ENCODE measurements at regions of chr12 and their contacts with region 1.

Region 1: GRCh38 chr12:6752921-6753771 is at the start of gene MLF2:
- DNase-seq: peak; percentile 96 to 98 (median 97)
- H3K4me3 ChIP-seq: peak within 1 kb of the TSS; percentile 62 to 77
- H3K4me3 Mint-ChIP-seq: peak within 1 kb of the TSS; percentile 94 to 98 (median 96)
- H3K27ac ChIP-seq: peak within 1 kb of the TSS; percentile 84
- H3K27ac Mint-ChIP-seq: peak within 1 kb of the TSS; percentile 99 to 100 (median 99)
- H3K4me1 ChIP-seq: peaks cover 13% of the 10 kb centered on the region
- H3K4me1 Mint-ChIP-seq: peaks cover 10 to 24% (median 17%) of the 10 kb centered on the region in 4 donors
- H3K27me3 ChIP-seq: no peaks in the 10 kb centered on the region
- H3K27me3 Mint-ChIP-seq: peaks cover 0 to 1% of the 10 kb centered on the region in 2 donors
- total RNA-seq, gene MLF2: 79.8 to 80.3 TPM

Region 2: GRCh38 chr12:6476489-6476888 is 276.7 kb before region 1 on chr12:
- CTCF ChIA-PET with region 1: no interaction called
- POLR2A ChIA-PET with region 1: no interaction called
- intact Hi-C with region 1: no loop called
- DNase-seq: no peak
- H3K4me3 ChIP-seq: no peak overlapping the region
- H3K4me3 Mint-ChIP-seq: no peak overlapping the region
- H3K27ac ChIP-seq: no peak overlapping the region
- H3K27ac Mint-ChIP-seq: no peak overlapping the region
- H3K4me1 ChIP-seq: peaks cover 1% of the 10 kb centered on the region
- H3K4me1 Mint-ChIP-seq: peaks cover 0 to 3% (median under 1%) of the 10 kb centered on the region in 4 donors
- H3K27me3 ChIP-seq: no peaks in the 10 kb centered on the region
- H3K27me3 Mint-ChIP-seq: peaks cover 0 to 2% of the 10 kb centered on the region in 2 donors

Region 3: DNA sequence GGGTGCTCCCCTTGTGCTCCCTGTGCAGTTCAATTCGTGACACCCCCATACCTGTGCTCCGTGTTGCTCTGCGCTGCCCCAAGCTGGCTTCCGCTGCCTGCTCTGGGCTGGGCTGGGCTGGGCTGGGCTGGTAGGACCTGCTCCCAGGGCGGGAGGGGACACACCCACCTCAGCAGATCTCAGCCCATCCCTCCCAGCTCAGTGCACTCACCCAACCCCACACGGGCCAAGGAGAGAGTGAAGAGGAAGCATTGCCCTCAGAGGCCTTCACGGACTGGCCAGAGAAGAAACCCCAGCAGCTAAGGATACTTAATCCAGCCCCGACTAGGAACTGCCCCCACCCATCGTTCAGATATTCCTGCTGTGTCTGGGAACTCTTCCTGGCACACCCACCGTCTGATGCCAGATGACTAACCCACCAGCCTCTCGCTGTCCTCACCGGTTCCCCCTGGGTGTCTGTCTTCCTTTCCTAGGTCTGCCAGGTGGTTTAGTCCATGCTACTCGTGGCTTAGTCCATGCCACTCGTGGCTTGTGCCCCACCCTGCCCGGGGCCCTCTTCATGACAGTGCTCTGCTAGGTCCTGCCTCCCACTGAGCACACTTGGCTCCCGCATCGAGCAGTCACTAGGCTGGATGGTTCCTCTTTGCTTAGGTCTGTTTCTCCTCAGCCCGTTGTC is 117.2 kb before region 1 on chr12 and contains the start of gene LPAR5:
- CTCF ChIA-PET with region 1: no interaction called
- POLR2A ChIA-PET with region 1: no interaction called
- intact Hi-C with region 1: no loop called
- DNase-seq: peak in 2 of 5 donors; percentile 34 to 44
- H3K4me3 ChIP-seq: no peak within 1 kb of the TSS
- H3K4me3 Mint-ChIP-seq: peak within 1 kb of the TSS; percentile 71 to 85 (median 79)
- H3K27ac ChIP-seq: peak within 1 kb of the TSS; percentile 28
- H3K27ac Mint-ChIP-seq: peak within 1 kb of the TSS; percentile 68 to 91 (median 84)
- H3K4me1 ChIP-seq: peaks cover 36% of the 10 kb centered on the region
- H3K4me1 Mint-ChIP-seq: peaks cover 26 to 52% (median 39%) of the 10 kb centered on the region in 4 donors
- H3K27me3 ChIP-seq: no peaks in the 10 kb centered on the region
- H3K27me3 Mint-ChIP-seq: no peaks in the 10 kb centered on the region
- total RNA-seq, gene LPAR5: 10.2 to 11.1 TPM

Region 4: DNA sequence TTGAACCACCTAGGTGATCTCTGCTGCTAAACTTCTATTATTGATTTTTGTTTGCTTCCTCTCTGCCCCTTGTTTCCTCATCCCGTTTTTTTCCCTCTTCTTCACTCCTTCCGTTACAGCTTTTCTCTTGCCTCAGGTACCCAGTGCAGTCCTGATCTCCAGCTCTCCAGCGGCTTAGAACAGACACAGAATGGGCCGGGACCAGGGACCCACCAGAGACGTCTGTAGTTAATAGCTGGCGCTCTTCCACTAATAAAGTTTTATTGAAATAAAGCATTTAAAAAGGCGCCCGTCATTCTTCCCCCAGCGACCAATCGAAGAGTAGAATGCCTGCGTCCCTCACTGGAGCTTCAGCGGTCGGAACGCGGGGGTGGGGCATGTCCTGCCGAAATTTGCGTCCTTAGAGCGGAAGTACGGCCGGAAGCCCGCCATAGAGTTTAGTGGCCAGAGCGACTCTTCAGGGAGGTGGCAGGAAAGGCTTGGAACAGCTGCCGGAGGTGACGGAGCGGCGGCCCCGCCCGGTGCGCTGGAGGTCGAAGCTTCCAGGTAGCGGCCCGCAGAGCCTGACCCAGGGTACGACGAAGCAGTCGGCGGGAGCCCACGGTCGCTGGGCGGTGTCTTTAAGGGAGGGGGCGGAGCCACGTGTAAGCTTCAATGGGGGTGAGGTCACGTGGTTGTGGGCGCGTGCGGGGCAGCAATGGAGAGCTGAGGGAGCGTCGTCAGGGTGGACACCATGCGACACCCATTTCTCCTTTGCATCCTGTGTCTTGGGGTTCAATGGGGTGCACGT is 29.3 kb before region 1 on chr12 and contains the start of gene COPS7A:
- CTCF ChIA-PET with region 1: interaction called, 32 read pairs
- POLR2A ChIA-PET with region 1: interaction called, 52 read pairs
- intact Hi-C with region 1: loop called (anchors 1 kb)
- DNase-seq: peak; percentile 93 to 97 (median 96)
- H3K4me3 ChIP-seq: peak within 1 kb of the TSS; percentile 40 to 64
- H3K4me3 Mint-ChIP-seq: peak within 1 kb of the TSS; percentile 88 to 98 (median 94)
- H3K27ac ChIP-seq: peak within 1 kb of the TSS; percentile 68
- H3K27ac Mint-ChIP-seq: peak within 1 kb of the TSS; percentile 92 to 99 (median 98)
- H3K4me1 ChIP-seq: peaks cover 21% of the 10 kb centered on the region
- H3K4me1 Mint-ChIP-seq: peaks cover 15 to 31% (median 22%) of the 10 kb centered on the region in 4 donors
- H3K27me3 ChIP-seq: no peaks in the 10 kb centered on the region
- H3K27me3 Mint-ChIP-seq: no peaks in the 10 kb centered on the region
- total RNA-seq, gene COPS7A: 36.9 to 37.7 TPM

Region 5: DNA sequence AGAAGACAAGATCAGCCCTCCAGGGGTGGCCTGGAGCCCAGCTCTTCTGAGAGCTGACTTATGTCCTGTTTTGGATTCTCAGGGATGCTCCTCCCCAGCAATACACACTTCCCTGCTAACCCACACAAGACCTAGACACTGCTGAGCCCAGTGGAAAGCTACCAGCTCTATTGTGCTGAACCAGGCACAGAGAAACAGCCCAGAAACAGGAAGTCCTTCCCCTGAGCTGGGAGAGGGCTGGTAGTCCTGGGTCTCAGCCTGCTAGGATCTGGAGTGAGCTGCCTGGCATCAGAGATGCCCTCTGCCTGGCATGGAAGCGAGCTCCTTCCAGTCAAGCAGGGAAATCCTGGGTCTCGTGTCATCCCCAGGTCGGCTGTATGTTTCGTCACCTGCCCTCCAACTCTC is 17.9 kb after region 1 on chr12:
- CTCF ChIA-PET with region 1: interaction called, 343 read pairs
- POLR2A ChIA-PET with region 1: interaction called, 44 read pairs
- intact Hi-C with region 1: loop called (anchors 1 kb)
- DNase-seq: no peak
- H3K4me3 ChIP-seq: no peak overlapping the region
- H3K4me3 Mint-ChIP-seq: peak overlapping the region in 2 of 8 donors; percentile 21 to 87
- H3K27ac ChIP-seq: no peak overlapping the region
- H3K27ac Mint-ChIP-seq: peak overlapping the region in 3 of 7 donors; percentile 14 to 60 (median 18)
- H3K4me1 ChIP-seq: peaks cover 46% of the 10 kb centered on the region
- H3K4me1 Mint-ChIP-seq: peaks cover 24 to 72% (median 46%) of the 10 kb centered on the region in 4 donors
- H3K27me3 ChIP-seq: peaks cover 20% of the 10 kb centered on the region
- H3K27me3 Mint-ChIP-seq: peaks cover 13 to 48% of the 10 kb centered on the region in 2 donors

Region 6: DNA sequence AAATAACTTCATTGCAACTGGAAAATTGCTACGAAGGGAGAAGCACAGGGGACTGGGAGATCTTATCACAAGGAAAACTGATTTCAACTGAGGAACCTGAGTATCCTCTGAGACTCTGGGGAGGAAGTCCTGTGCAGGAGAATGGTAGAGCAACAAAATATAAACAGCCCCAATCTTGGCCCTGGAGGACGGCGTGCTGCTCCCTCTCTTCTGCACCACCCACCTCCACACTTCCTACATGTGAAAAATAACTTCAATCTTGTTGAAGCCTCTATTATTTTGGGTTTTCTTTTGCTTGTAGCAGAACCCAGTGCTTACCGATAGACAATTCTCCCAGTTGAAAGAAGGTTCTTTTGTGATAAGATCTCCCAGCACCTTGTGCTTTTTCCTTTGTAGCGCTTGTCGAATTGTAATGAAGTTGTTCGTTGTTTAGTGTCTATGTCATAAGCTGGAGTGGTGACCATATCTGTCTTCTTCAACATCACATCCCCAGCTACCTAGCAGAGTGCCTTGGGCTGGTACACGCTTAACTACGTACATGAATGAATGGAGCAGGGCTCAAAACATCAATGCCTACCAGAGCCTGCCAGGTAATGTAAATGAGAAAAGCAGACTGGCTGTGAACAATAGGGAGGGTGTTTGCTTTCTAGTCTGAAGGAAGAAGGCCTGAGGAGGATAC is 33.4 kb after region 1 on chr12:
- CTCF ChIA-PET with region 1: interaction called, 343 read pairs
- POLR2A ChIA-PET with region 1: interaction called, 36 read pairs
- intact Hi-C with region 1: loop called (anchors 1 kb)
- DNase-seq: peak; percentile 61 to 75 (median 68)
- H3K4me3 ChIP-seq: peak overlapping the region in 1 of 2 donors; percentile 36
- H3K4me3 Mint-ChIP-seq: peak overlapping the region; percentile 65 to 87 (median 73)
- H3K27ac ChIP-seq: peak overlapping the region; percentile 70
- H3K27ac Mint-ChIP-seq: peak overlapping the region; percentile 89 to 97 (median 96)
- H3K4me1 ChIP-seq: peaks cover 52% of the 10 kb centered on the region
- H3K4me1 Mint-ChIP-seq: peaks cover 27 to 79% (median 57%) of the 10 kb centered on the region in 4 donors
- H3K27me3 ChIP-seq: no peaks in the 10 kb centered on the region
- H3K27me3 Mint-ChIP-seq: no peaks in the 10 kb centered on the region

Region 7: GRCh38 chr12:6825398-6826124 is 72.4 kb after region 1 on chr12:
- CTCF ChIA-PET with region 1: interaction called, 143 read pairs
- POLR2A ChIA-PET with region 1: interaction called, 48 read pairs
- intact Hi-C with region 1: loop called (anchors 1 kb)
- DNase-seq: peak; percentile 73 to 82 (median 78)
- H3K4me3 ChIP-seq: no peak overlapping the region
- H3K4me3 Mint-ChIP-seq: peak overlapping the region in 1 of 8 donors; percentile 57
- H3K27ac ChIP-seq: no peak overlapping the region
- H3K27ac Mint-ChIP-seq: peak overlapping the region in 4 of 7 donors; percentile 24 to 71 (median 34)
- H3K4me1 ChIP-seq: peaks cover 36% of the 10 kb centered on the region
- H3K4me1 Mint-ChIP-seq: peaks cover 17 to 60% (median 28%) of the 10 kb centered on the region in 4 donors
- H3K27me3 ChIP-seq: peaks cover 10% of the 10 kb centered on the region
- H3K27me3 Mint-ChIP-seq: peaks cover 6 to 24% of the 10 kb centered on the region in 2 donors

Region 8: DNA sequence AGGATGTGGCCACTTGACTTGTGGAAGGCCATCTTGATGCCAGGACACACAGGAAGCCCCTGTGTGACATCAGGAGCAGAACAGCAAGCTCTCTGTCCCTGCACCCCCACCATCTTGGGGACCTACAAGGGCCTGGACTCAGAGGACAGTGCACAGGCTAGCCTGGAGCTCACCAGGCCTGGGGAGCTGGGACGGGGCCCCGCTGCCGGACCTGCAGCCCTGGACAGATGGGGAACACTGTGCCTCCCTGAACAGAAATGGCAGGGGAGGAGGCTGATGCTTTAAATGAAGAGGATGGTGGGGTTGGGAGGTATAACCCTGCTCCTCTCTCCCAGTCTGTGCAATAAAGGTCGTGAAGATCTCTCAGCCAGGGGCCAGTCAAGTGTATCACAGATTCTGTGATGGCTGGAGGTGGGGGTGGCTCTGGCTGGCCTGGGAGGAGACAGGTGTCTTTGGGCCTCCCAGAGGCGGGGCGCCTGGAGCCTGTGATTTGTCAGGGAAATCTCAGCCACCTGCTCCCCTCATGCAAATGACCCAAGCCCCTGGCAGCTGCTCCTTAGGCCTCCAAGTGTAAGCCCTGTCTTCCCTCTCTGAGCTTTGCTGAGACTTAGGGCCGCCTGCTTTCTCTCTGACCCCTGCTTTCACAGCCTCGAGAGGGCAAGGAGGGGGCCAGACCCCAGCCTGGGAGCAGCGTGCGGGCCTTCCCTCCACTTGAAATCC is 86.5 kb after region 1 on chr12:
- CTCF ChIA-PET with region 1: interaction called, 72 read pairs
- POLR2A ChIA-PET with region 1: interaction called, 20 read pairs
- intact Hi-C with region 1: loop called (anchors 1 kb)
- DNase-seq: peak in 1 of 5 donors; percentile 9
- H3K4me3 ChIP-seq: no peak overlapping the region
- H3K4me3 Mint-ChIP-seq: no peak overlapping the region
- H3K27ac ChIP-seq: no peak overlapping the region
- H3K27ac Mint-ChIP-seq: no peak overlapping the region
- H3K4me1 ChIP-seq: peaks cover 7% of the 10 kb centered on the region
- H3K4me1 Mint-ChIP-seq: peaks cover 0 to 5% (median 2%) of the 10 kb centered on the region in 4 donors
- H3K27me3 ChIP-seq: no peaks in the 10 kb centered on the region
- H3K27me3 Mint-ChIP-seq: no peaks in the 10 kb centered on the region

Region 9: DNA sequence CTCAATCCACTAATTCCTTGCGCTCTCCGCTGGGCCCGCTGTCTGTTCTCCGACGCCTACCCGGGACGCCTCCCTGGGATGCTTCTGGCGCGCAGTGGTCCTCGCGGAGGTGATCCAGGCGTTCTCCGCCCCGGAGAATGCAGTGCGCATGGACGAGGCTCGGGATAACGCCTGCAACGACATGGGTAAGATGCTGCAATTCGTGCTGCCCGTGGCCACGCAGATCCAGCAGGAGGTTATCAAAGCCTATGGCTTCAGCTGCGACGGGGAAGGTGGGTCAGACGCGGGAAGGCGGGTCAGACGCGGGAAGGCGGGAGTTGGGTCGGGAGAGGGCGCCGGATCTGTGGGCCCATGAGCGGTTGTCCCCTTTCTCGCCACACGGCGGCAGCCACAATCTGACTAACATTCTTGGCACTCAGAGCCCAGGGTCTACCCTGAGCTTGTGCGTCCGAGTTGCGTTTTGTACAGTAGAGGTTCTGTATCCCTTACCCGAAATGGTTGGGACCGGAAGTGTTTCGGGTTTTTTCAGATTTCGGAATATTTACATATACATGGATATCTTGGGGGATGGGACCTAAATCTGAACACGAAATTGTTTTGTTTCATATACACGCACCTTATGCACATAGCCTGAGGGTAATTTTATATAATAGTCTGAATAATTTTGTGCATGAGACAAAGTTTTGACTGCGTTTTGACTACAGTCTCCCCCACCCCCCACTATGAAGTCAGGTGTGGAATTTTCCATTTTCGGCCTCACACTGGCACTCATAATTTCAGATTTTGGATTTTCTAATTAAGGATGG is 191.4 kb after region 1 on chr12:
- CTCF ChIA-PET with region 1: no interaction called
- POLR2A ChIA-PET with region 1: interaction called, 13 read pairs
- intact Hi-C with region 1: no loop called
- DNase-seq: peak; percentile 84 to 90 (median 85)
- H3K4me3 ChIP-seq: peak overlapping the region; percentile 87 to 90
- H3K4me3 Mint-ChIP-seq: peak overlapping the region; percentile 91 to 99 (median 98)
- H3K27ac ChIP-seq: peak overlapping the region; percentile 91
- H3K27ac Mint-ChIP-seq: peak overlapping the region; percentile 95 to 100 (median 98)
- H3K4me1 ChIP-seq: peaks cover 66% of the 10 kb centered on the region
- H3K4me1 Mint-ChIP-seq: peaks cover 37 to 74% (median 60%) of the 10 kb centered on the region in 4 donors
- H3K27me3 ChIP-seq: no peaks in the 10 kb centered on the region
- H3K27me3 Mint-ChIP-seq: no peaks in the 10 kb centered on the region

Measured in CD4-positive, alpha-beta memory T cell (primary cell).